Ascending aorta (tissue), 2 donors: ENCODE measurements at regions of chr1 and their contacts with region 1.

Region 1: GRCh38 chr1:155934097-155934935 is at the start of gene KHDC4:
- DNase-seq: peak; percentile 91 to 98
- H3K4me3 ChIP-seq: peak within 1 kb of the TSS; percentile 74 to 82
- H3K27ac ChIP-seq: peak within 1 kb of the TSS; percentile 90 to 94
- H3K4me1 ChIP-seq: peaks cover 18 to 42% of the 10 kb centered on the region in 2 donors
- H3K27me3 ChIP-seq: no peaks in the 10 kb centered on the region
- CTCF ChIP-seq: peak; percentile 20 to 35 (median 35)
- total RNA-seq, gene KHDC4: 101 TPM

Region 2: DNA sequence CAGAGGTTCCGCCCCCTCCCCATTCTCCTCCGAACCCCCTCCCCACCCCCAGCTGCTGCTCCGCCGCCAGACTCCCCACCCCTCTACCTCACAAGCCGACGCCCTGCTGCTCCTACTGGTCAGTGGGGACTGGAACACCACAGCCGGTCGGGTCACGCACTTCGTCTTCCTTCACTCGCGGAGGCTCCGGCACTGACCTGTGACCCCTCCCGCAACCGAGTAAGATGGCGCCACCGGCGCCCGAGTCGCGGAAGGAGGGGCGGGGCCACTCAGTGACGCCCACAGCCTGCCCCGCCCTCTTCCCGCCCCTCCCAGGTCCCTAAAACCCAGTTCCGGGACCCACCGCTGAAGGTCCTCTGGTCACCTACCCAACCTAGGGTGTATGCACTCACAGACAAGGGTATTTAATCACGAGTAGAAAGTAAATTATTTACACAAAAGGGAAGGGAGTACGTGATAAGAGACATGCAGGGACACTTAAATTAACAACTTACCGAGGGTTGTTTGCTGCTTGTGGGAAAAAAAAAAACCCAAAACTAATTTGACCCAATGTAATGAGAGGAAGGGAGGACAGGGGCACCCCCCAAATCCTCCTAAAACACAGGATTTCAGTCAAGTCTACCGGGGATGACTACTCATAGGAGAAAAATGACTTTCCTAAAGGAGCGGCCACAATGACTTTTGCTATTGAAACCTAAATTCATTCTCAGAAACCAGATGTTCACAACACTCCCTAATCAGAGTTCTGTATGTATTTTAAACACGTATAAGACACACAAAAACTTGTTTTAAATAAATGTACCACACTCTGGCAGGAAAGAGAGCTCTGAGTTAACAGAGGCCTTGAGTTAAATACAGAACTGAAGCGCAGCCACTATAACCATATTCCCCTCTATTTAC is 22.9 kb before region 1 on chr1 and contains the start of gene RIT1:
- intact Hi-C with region 1: loop called (anchors 1 kb)
- DNase-seq: peak; percentile 59 to 94
- H3K4me3 ChIP-seq: peak within 1 kb of the TSS; percentile 78 to 84
- H3K27ac ChIP-seq: peak within 1 kb of the TSS; percentile 90 to 95
- H3K4me1 ChIP-seq: peaks cover 3 to 15% of the 10 kb centered on the region in 2 donors
- H3K27me3 ChIP-seq: no peaks in the 10 kb centered on the region
- CTCF ChIP-seq: peak in 1 of 3 experiments; percentile 16
- total RNA-seq, gene RIT1: 17.1 TPM

Region 3: GRCh38 chr1:155961937-155962336 is 27.6 kb after region 1 on chr1:
- intact Hi-C with region 1: loop called (anchors 1 kb)
- DNase-seq: peak; percentile 79 to 95
- H3K4me3 ChIP-seq: peak overlapping the region in 1 of 2 donors; percentile 9
- H3K27ac ChIP-seq: peak overlapping the region; percentile 89 to 92
- H3K4me1 ChIP-seq: peaks cover 9 to 36% of the 10 kb centered on the region in 2 donors
- H3K27me3 ChIP-seq: no peaks in the 10 kb centered on the region
- CTCF ChIP-seq: peak; percentile 14 to 34 (median 34)

Region 4: GRCh38 chr1:155989242-155990004 is 55.1 kb after region 1 on chr1:
- intact Hi-C with region 1: loop called (anchors 1 kb)
- DNase-seq: peak in 1 of 2 donors; percentile 91
- H3K4me3 ChIP-seq: peak overlapping the region; percentile 54 to 79
- H3K27ac ChIP-seq: peak overlapping the region; percentile 77 to 86
- H3K4me1 ChIP-seq: peaks cover 0 to 3% of the 10 kb centered on the region in 2 donors
- H3K27me3 ChIP-seq: no peaks in the 10 kb centered on the region
- CTCF ChIP-seq: peak; percentile 98 to 99 (median 98)

Region 5: GRCh38 chr1:156054500-156055280 is 120.4 kb after region 1 on chr1 and contains the start of gene LAMTOR2:
- intact Hi-C with region 1: loop called (anchors 10 kb)
- DNase-seq: peak; percentile 92 to 99
- H3K4me3 ChIP-seq: peak within 1 kb of the TSS; percentile 58 to 73
- H3K27ac ChIP-seq: peak within 1 kb of the TSS; percentile 85 to 96
- H3K4me1 ChIP-seq: peaks cover 0 to 8% of the 10 kb centered on the region in 2 donors
- H3K27me3 ChIP-seq: no peaks in the 10 kb centered on the region
- CTCF ChIP-seq: no peak
- total RNA-seq, gene LAMTOR2: 43.9 TPM

Region 6: GRCh38 chr1:156551866-156552265 is 617.5 kb after region 1 on chr1:
- intact Hi-C with region 1: no loop called
- DNase-seq: no peak
- H3K4me3 ChIP-seq: no peak overlapping the region
- H3K27ac ChIP-seq: no peak overlapping the region
- H3K4me1 ChIP-seq: no peaks in the 10 kb centered on the region
- H3K27me3 ChIP-seq: no peaks in the 10 kb centered on the region
- CTCF ChIP-seq: no peak